Transverse colon (tissue), 4 donors: ENCODE measurements at regions of chr3 and their contacts with region 1.

Region 1: GRCh38 chr3:58299839-58300516 is 6.1 kb upstream of the RPP14 start:
- DNase-seq: no peak
- H3K4me3 ChIP-seq: no peak overlapping the region
- H3K27ac ChIP-seq: no peak overlapping the region
- H3K4me1 ChIP-seq: no peaks in the 10 kb centered on the region
- H3K27me3 ChIP-seq: peaks cover 20% of the 10 kb centered on the region
- CTCF ChIP-seq: peak; percentile 45 to 65 (median 55)
- EP300 ChIP-seq: no peak
- POLR2A ChIP-seq: no peak

Region 2: GRCh38 chr3:58129041-58129770 is 170.8 kb before region 1 on chr3:
- in situ Hi-C with region 1: no loop called
- intact Hi-C with region 1: no loop called
- DNase-seq: no peak
- H3K4me3 ChIP-seq: no peak overlapping the region
- H3K27ac ChIP-seq: peak overlapping the region in 1 of 4 donors; percentile 38
- H3K4me1 ChIP-seq: no peaks in the 10 kb centered on the region
- H3K27me3 ChIP-seq: no peaks in the 10 kb centered on the region
- CTCF ChIP-seq: no peak
- EP300 ChIP-seq: no peak
- POLR2A ChIP-seq: no peak

Region 3: DNA sequence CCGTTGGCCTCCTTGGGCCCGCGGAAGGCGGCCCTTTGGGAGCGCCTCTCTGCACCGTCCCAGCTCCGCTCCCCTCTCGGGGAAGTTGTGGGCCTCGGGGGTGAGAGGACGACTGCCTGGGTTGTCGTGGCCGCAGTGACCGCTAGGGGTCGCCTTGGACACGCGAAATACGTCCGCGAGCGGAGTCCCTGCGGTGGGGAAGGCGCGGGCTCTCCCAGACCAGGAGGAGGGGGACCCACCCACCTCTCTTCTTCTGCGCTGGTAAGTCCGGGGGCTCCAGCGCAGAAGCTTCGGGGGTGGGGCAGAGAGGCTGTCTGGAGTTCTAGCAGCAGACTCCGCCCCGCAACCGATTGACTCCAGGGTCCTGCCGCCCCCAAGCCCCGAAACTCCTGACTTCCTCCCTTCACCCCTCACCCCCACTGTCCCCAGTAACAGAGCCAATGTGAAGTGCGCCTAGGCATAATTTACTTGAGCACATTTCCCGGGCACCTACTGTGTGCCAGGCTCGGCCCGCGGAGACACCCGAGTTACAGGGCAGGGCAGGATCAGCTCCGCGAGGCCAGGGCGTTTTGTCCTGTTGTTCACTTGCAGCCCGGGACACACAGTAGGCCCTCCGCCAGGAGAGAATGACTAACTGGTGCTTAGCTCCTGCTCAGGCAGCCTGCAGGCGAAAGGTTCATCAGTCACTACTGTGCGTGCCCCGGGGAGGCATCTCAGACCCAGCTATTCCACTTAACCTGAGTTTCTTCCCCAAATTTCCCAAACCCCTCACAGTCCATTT is 122.0 kb before region 1 on chr3:
- in situ Hi-C with region 1: loop called in 2 of 4 experiments (anchors 5 kb)
- intact Hi-C with region 1: loop called (anchors 2 kb)
- DNase-seq: peak; percentile 94
- H3K4me3 ChIP-seq: peak overlapping the region; percentile 18 to 38 (median 34)
- H3K27ac ChIP-seq: peak overlapping the region in 3 of 4 donors; percentile 4 to 50 (median 15)
- H3K4me1 ChIP-seq: peaks cover 28 to 62% (median 45%) of the 10 kb centered on the region in 4 donors
- H3K27me3 ChIP-seq: no peaks in the 10 kb centered on the region
- CTCF ChIP-seq: peak; percentile 90 to 97 (median 96)
- EP300 ChIP-seq: no peak
- POLR2A ChIP-seq: no peak

Region 4: DNA sequence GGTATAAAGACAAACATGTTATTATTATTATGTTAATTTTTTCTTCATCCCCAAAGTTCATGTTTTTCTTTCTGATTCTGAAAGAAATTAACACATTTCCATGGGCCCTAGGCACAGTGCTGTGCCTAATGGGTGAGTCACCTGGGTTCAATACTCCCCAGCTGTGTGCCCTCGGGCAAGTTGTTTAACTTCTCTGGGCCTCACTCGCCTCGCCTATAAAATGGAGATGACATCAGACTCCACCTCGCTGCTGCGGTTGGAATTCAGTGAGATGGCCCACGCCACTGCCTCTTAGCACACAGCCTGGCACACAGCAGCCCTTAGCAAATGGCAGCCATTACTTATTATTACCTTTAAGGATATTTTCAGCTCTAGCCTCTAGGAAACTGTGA is 111.8 kb before region 1 on chr3:
- in situ Hi-C with region 1: loop called (anchors 5 kb)
- intact Hi-C with region 1: no loop called
- DNase-seq: no peak
- H3K4me3 ChIP-seq: no peak overlapping the region
- H3K27ac ChIP-seq: no peak overlapping the region
- H3K4me1 ChIP-seq: peaks cover 0 to 7% (median 0%) of the 10 kb centered on the region in 4 donors
- H3K27me3 ChIP-seq: no peaks in the 10 kb centered on the region
- CTCF ChIP-seq: no peak
- EP300 ChIP-seq: no peak
- POLR2A ChIP-seq: no peak

Region 5: DNA sequence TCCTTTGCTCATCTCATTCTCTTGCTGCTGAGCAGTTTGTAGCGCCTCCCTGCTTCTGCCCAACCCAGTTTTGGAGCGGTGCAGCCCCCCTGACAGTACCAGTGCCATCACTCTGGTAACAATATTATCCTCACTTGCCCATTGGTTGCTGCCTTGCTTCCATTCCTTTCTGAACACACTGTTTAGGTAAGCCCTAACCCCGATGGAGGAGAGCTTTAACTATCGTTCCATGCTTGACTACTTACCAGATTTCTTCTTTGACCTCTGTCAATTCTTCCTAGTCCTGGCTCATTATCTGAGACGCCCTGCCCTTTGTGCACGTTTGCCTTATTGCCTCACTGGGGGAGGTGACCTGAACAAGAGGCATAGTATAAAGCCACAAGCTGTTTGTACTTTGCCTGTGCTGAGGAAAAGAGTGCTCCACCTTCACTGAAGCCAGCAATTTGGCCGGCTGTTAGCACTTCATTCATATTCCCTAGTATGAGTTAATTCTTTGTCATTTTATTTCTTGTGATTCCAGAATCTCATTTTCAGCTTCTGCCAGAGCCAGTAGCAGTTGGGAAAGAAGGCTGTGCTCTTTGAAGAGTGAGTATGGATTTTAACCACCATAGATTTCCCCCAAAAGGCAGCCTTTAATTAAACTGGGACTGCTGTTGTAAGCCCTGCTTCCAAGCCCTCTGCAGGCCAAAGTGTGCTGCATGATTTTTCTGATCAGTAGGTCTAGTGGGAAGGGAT is 50.5 kb before region 1 on chr3:
- in situ Hi-C with region 1: loop called in 1 of 4 experiments (anchors 10 kb)
- intact Hi-C with region 1: no loop called
- DNase-seq: peak; percentile 81
- H3K4me3 ChIP-seq: peak overlapping the region in 1 of 4 donors; percentile 26
- H3K27ac ChIP-seq: peak overlapping the region; percentile 72 to 83 (median 80)
- H3K4me1 ChIP-seq: peaks cover 27 to 68% (median 42%) of the 10 kb centered on the region in 4 donors
- H3K27me3 ChIP-seq: no peaks in the 10 kb centered on the region
- CTCF ChIP-seq: peak in 4 of 5 experiments; percentile 18 to 50 (median 31)
- EP300 ChIP-seq: no peak
- POLR2A ChIP-seq: peak; percentile 75